ENCODE measurements at regions of chr3 and their contacts with region 1.

Region 1: GRCh38 chr3:183085634-183086390 is 13.5 kb downstream of the MCCC1 start:
- DNase-seq: peak; percentile 56
- H3K4me3 ChIP-seq: no peak overlapping the region
- CTCF ChIP-seq: peak; percentile 24

Region 2: DNA sequence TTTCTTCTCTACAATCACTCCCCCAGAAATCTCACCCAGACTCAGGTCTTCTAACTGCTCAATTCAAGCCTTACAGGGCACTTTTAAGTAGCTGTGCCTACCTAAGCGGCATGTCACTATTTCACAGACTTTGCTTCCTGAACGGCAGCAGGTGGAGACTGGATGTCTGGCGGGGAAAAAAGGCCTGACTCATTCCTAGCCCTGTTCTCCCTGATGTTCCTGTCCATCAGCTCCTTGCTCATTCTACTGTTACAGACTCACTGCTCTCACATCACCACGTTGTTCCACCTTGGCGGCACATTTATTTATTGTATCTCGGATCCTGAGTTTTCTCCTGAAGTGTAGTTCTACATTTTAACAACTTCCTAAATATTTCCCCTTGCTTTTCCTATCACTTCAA is 345.1 kb before region 1 on chr3:
- CTCF ChIA-PET with region 1: no interaction called
- POLR2A ChIA-PET with region 1: no interaction called
- DNase-seq: no peak
- H3K4me3 ChIP-seq: no peak overlapping the region
- CTCF ChIP-seq: no peak

Region 3: DNA sequence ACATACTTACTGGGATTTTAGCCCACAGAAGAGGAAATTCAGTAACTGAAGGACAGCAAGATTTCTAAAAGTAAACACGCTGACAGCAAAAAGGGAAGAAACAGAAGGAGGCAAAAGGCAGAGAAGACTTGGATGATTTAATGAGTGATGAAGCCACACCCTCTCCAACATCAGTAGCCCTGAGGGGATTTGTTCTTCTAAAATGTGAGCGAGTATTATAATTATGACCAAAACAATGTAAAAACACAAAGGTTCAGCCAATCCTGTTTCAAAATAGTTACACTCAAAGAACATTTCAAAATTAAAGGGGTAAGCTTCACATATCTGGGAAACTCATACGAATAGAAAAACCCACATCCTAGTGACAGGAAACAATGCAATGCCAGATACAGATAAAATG is 11.6 kb before region 1 on chr3:
- CTCF ChIA-PET with region 1: interaction called, 10 read pairs
- POLR2A ChIA-PET with region 1: no interaction called
- DNase-seq: no peak
- H3K4me3 ChIP-seq: no peak overlapping the region
- CTCF ChIP-seq: no peak

Region 4: GRCh38 chr3:183099026-183099837 is 13.4 kb after region 1 on chr3 and contains the start of gene MCCC1:
- CTCF ChIA-PET with region 1: interaction called, 22 read pairs
- POLR2A ChIA-PET with region 1: interaction called, 3 read pairs
- DNase-seq: peak; percentile 90
- H3K4me3 ChIP-seq: peak within 1 kb of the TSS; percentile 95
- CTCF ChIP-seq: no peak

Region 5: DNA sequence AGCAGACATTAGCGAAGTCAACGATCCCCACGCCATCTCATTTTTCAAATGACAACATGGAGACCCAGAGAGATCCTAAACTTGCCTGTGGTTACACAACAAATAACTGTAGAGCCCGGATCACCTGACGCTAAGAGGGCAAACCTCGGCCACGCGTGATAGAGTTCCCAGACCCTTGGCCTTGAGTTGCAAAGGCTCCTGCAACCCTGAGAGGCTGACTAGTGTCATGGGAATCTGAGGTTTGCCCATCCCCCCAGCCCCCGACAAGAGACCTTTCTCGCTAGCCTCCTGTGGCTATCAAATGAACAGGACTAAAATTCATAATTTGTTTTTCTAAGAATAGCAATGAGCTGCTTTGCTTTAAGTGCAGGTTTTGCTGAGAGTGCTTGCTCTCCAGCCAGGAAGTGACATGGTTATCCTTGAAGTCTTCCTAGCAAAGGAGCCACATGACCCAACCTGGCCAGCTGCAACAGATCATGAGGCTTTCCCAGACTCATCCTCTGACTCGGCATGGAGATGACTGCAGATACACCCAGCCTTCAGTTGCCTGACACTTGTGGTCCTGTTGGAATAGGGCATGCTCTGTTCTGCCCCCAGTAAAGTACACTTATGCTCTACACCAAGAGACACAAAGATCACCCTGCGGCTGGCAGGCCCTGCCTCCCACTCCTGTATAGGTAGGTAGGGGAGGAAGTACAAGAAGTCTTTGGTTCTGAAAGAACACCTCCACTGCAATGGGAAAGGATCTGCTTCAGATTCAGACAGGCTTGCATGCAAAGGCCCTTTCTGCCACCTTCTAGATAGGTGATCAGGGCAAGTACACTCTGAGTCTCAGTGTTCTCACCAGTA is 306.6 kb after region 1 on chr3:
- CTCF ChIA-PET with region 1: no interaction called
- POLR2A ChIA-PET with region 1: no interaction called
- DNase-seq: no peak
- H3K4me3 ChIP-seq: no peak overlapping the region
- CTCF ChIP-seq: no peak